Activated T-helper 2 cell treated with anti-CD3 and anti-CD28 coated beads, Interferon-gamma antibody, Interleukin-2, Interleukin-4, amounts not matched to agents 10 μg/mL and 5 μg/mL and 100 μg/mL, durations not matched to agents 14 hours and 24 hours and 36 hours (primary cell): ENCODE measurements at regions of chr2 and their contacts with region 1.

Region 1: GRCh38 chr2:43611987-43612894 is 16.4 kb upstream of the THADA start:
- DNase-seq: peak; percentile 61
- H3K4me3 Mint-ChIP-seq: no peak overlapping the region
- H3K27ac Mint-ChIP-seq: no peak overlapping the region
- H3K4me1 Mint-ChIP-seq: peaks cover 9% of the 10 kb centered on the region
- H3K27me3 Mint-ChIP-seq: peaks cover 4% of the 10 kb centered on the region

Region 2: DNA sequence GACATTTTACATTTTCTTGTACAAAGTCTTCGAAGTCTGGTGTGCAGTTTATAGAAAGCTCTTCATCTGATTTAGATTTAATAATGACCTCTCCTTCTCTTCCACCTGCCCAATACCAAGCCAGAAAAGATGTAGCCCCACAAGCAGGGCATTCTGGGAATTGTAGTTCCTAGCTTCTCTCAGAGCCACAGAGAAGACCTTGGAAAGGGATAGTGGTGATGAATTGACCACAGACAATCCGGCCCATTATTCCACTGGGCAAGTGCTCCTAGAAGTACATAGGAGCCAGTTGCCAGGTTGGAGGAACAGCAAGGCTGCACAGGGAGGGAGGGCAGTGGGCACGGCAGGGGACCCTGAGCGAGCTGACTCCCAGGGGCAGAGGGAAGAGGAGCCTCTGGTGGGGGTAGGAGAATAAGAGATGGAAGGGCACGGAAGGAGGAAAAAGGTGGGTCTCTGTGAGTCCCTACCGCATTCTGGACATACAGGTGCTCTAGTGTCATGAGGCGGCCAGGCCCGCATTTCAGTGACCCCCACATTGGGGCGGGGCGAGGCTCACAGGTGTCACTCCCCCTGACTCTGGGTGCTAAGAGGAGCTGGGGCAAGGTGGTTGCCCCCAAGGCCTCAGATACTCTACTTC is 667.3 kb before region 1 on chr2:
- intact Hi-C with region 1: loop called (anchors 5 kb)
- DNase-seq: no peak
- H3K4me3 Mint-ChIP-seq: no peak overlapping the region
- H3K27ac Mint-ChIP-seq: no peak overlapping the region
- H3K4me1 Mint-ChIP-seq: peaks cover 3% of the 10 kb centered on the region
- H3K27me3 Mint-ChIP-seq: peaks cover 2% of the 10 kb centered on the region

Region 3: GRCh38 chr2:43637030-43637803 is 25.0 kb after region 1 on chr2 and contains the start of gene PLEKHH2:
- intact Hi-C with region 1: loop called (anchors 2 kb)
- DNase-seq: peak; percentile 86
- H3K4me3 Mint-ChIP-seq: peak within 1 kb of the TSS; percentile 89
- H3K27ac Mint-ChIP-seq: peak within 1 kb of the TSS; percentile 70
- H3K4me1 Mint-ChIP-seq: peaks cover 19% of the 10 kb centered on the region
- H3K27me3 Mint-ChIP-seq: peaks cover 32% of the 10 kb centered on the region
- total RNA-seq, gene PLEKHH2: 21.3 and 25.1 TPM in 2 replicates

Region 4: DNA sequence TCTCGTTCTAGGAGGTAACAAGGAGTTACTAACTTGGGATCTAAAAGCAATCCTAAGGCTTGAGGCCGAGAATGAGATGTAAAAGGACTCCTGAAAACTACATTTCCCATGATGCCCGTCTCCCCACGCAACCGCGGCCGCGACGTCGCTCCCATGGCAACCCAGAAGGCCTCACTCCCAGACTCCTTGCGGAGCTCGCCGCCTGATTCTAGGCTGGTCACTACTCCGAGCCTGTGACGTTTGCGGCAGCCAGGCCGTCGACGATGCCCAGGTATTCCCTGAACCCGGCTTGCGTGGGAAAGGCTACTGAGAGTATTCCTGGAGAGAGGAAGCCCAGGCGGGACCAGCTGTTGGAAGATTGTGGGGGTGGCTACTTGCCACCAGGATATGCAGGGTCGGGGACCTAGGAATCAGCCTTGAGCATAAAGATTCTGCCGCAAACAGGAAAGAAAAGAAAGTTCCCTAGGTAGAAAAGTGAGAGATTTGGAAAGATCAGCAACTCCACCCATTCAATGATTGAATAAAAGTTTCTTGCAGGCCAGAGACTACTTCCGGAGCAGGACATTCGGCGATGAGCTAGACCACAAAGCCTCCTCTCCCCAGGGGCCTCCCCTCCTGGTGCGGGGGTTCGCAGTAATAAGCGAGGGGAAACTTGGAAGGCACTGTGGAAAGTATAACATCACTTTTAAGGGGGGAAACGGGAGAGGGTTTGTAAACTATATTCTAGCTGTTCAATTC is 161.8 kb after region 1 on chr2 and contains the start of gene DYNC2LI1:
- intact Hi-C with region 1: loop called (anchors 5 kb)
- DNase-seq: peak; percentile 74
- H3K4me3 Mint-ChIP-seq: peak within 1 kb of the TSS; percentile 86
- H3K27ac Mint-ChIP-seq: peak within 1 kb of the TSS; percentile 95
- H3K4me1 Mint-ChIP-seq: peaks cover 31% of the 10 kb centered on the region
- H3K27me3 Mint-ChIP-seq: no peaks in the 10 kb centered on the region
- total RNA-seq, gene DYNC2LI1: 67.7 and 71.6 TPM in 2 replicates

Region 5: DNA sequence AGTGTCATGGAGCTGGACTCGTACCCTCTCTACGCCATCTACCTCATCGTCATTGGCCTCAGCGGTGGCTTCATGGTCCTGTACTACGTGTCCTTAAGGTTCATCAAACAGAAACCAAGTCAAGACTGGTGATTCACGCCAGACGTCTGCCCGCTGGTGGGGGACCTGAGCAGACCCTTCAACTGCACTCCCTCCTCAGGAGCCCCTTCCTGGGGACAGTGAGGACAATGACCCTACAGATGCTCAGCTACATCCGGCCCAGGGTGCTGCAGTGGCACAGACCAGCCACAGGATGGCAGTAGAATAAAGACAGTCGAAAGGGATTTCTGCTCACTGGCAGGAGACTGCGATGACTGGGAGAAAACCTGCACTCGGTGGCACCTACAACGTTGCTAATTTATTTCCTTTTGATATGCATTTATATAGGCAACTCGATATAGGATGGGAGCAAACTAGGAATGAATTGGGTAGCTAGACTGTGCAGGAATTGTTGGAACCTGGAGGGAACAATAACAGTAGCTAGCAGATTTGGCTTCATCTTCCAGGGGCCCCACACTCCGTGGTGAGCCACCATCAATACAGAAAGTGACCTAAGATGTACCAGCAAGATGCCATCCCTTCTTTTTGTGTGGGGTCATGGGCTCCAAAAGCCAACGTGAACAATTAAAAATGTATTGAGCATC is 265.7 kb after region 1 on chr2:
- intact Hi-C with region 1: loop called (anchors 5 kb)
- DNase-seq: peak; percentile 62
- H3K4me3 Mint-ChIP-seq: no peak overlapping the region
- H3K27ac Mint-ChIP-seq: no peak overlapping the region
- H3K4me1 Mint-ChIP-seq: peaks cover 11% of the 10 kb centered on the region
- H3K27me3 Mint-ChIP-seq: no peaks in the 10 kb centered on the region

Region 6: GRCh38 chr2:43925431-43925830 is 313.2 kb after region 1 on chr2:
- intact Hi-C with region 1: no loop called
- DNase-seq: no peak
- H3K4me3 Mint-ChIP-seq: no peak overlapping the region
- H3K27ac Mint-ChIP-seq: no peak overlapping the region
- H3K4me1 Mint-ChIP-seq: peaks cover 15% of the 10 kb centered on the region
- H3K27me3 Mint-ChIP-seq: no peaks in the 10 kb centered on the region